B cell (primary cell): ENCODE measurements at regions of chr22 and their contacts with region 1.

Region 1: DNA sequence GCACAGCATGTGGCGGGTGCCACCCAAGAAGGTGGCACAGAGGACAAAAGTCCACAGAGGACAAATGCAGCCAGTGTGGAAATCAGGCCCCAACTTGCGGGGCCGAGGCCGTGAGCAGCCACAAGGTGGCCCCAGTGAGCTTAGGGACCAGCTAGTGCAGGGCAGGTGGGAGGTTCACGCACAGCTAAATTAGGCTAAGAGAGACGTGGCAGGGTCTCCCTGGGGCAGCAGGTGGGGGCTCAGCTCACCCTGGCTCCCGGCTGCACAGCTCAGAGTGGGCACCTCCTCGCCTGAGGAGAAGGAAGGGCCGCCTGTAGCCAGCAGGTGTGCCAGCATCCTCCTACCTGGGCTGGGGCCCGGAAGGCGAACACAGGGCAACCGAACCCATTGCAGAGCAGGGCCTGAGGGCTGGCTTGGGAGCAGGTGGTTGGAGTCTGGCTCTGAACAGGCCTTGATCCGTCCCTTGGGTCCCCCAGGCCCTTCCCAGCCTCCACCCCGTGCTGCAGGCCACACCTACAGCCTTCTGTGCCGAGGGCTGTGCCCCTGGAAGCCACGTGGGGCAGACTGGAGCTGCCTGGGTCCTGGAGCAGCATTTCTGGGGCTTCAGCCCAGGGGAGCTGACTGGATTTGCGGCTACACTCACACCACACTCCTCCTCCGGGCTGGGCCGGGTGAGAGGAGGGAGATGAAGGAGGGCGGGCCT is 26.1 kb upstream of the CELSR1 start:
- DNase-seq: peak; percentile 87
- ATAC-seq: peak; percentile 86
- H3K4me3 ChIP-seq: peak overlapping the region in 2 of 5 experiments; percentile 29 to 47
- H3K4me3 Mint-ChIP-seq: peak overlapping the region; percentile 72
- H3K27ac ChIP-seq: no peak overlapping the region
- H3K27ac Mint-ChIP-seq: peak overlapping the region; percentile 47
- H3K4me1 ChIP-seq: peaks cover 7 to 24% of the 10 kb centered on the region in 2 donors
- H3K4me1 Mint-ChIP-seq: peaks cover 19% of the 10 kb centered on the region
- H3K27me3 ChIP-seq: no peaks in the 10 kb centered on the region
- H3K27me3 Mint-ChIP-seq: no peaks in the 10 kb centered on the region
- CTCF ChIP-seq: peak; percentile 74

Region 2: DNA sequence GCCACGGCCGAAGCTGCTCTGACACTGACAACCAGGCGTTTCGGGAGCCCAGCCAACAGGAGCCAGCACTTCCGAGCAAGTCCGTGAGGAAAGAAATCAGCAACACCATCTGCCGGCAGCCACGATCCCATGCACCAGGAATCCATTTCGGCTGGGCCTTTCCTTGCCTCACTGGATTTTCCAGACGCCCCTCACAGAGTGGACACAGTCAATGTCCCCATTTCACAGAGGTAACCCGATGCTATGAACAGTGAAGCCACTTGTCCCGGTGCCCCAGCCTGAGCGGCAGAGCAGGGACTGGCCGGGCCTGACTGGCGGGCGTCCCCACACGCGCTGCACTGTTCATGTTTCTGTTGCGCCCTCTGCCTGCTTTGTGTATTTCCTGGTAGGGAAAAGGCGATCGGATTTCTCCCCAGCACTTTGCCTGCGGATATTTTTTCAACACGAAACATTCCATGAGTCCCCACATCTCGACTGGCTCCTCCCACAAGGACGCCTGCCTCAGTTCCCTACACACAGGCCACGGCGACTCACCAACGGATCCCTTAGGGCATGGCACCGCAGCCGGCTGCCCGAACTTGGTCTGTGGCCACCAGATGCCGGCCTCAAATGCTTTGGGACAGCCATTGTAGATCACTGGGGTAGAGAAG is 172.8 kb before region 1 on chr22:
- CTCF ChIA-PET with region 1: no interaction called
- POLR2A ChIA-PET with region 1: no interaction called
- intact Hi-C with region 1: no loop called
- DNase-seq: no peak
- ATAC-seq: no peak
- H3K4me3 ChIP-seq: no peak overlapping the region
- H3K4me3 Mint-ChIP-seq: no peak overlapping the region
- H3K27ac ChIP-seq: no peak overlapping the region
- H3K27ac Mint-ChIP-seq: no peak overlapping the region
- H3K4me1 ChIP-seq: no peaks in the 10 kb centered on the region
- H3K4me1 Mint-ChIP-seq: no peaks in the 10 kb centered on the region
- H3K27me3 ChIP-seq: no peaks in the 10 kb centered on the region
- H3K27me3 Mint-ChIP-seq: no peaks in the 10 kb centered on the region
- CTCF ChIP-seq: no peak

Region 3: DNA sequence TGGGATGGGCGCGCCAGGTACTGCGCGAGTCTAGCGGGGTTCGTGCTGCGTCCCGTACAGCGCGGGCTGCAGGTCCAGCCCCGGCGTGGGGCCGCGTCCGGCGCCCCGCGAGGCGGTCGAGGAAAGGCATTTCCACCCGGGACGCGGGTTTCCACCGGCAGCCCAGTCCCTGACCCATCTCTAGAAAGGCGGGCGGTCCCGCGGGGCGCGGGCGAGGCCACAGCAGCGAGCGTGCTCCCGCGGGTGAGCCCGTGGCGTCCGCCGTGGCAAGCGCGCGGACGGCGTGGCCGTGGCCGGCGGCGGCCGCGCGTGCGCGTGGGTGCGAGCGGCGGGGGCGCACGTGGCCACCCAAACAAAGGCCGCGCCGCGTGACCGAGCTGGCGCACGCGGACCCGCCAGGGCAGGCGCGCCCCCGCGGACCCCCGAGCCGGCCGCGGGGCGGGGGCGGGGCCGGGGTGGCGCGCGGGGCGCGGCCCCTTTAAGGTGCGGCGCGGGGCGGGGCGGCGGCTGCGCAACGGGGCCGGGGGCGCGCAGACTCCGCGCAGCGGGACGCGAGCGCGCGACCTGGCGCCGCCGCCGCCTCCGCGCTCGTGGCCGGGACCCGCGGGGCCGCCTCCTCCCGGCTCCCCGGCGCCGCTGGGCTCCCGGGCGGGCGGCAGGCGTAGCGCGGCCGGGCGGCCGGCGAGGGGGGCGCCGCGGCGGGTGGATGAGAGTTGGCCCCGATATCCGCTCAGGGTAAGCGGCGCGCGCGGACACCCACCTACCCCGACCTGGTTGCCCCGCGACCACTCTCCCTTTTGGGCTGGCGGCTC is 13.2 kb after region 1 on chr22:
- CTCF ChIA-PET with region 1: interaction called, 11 read pairs
- POLR2A ChIA-PET with region 1: no interaction called
- intact Hi-C with region 1: no loop called
- DNase-seq: peak; percentile 79
- ATAC-seq: peak; percentile 76
- H3K4me3 ChIP-seq: peak overlapping the region in 4 of 5 experiments; percentile 52 to 64 (median 61)
- H3K4me3 Mint-ChIP-seq: peak overlapping the region; percentile 84
- H3K27ac ChIP-seq: no peak overlapping the region
- H3K27ac Mint-ChIP-seq: peak overlapping the region; percentile 84
- H3K4me1 ChIP-seq: peaks cover 45 to 54% of the 10 kb centered on the region in 2 donors
- H3K4me1 Mint-ChIP-seq: peaks cover 54% of the 10 kb centered on the region
- H3K27me3 ChIP-seq: no peaks in the 10 kb centered on the region
- H3K27me3 Mint-ChIP-seq: no peaks in the 10 kb centered on the region
- CTCF ChIP-seq: no peak

Region 4: GRCh38 chr22:46598737-46599424 is 35.3 kb after region 1 on chr22:
- CTCF ChIA-PET with region 1: interaction called, 16 read pairs
- POLR2A ChIA-PET with region 1: interaction called, 3 read pairs
- intact Hi-C with region 1: no loop called
- DNase-seq: no peak
- ATAC-seq: no peak
- H3K4me3 ChIP-seq: no peak overlapping the region
- H3K4me3 Mint-ChIP-seq: no peak overlapping the region
- H3K27ac ChIP-seq: no peak overlapping the region
- H3K27ac Mint-ChIP-seq: no peak overlapping the region
- H3K4me1 ChIP-seq: peaks cover 8 to 39% of the 10 kb centered on the region in 2 donors
- H3K4me1 Mint-ChIP-seq: peaks cover 38% of the 10 kb centered on the region
- H3K27me3 ChIP-seq: no peaks in the 10 kb centered on the region
- H3K27me3 Mint-ChIP-seq: no peaks in the 10 kb centered on the region
- CTCF ChIP-seq: no peak

Region 5: DNA sequence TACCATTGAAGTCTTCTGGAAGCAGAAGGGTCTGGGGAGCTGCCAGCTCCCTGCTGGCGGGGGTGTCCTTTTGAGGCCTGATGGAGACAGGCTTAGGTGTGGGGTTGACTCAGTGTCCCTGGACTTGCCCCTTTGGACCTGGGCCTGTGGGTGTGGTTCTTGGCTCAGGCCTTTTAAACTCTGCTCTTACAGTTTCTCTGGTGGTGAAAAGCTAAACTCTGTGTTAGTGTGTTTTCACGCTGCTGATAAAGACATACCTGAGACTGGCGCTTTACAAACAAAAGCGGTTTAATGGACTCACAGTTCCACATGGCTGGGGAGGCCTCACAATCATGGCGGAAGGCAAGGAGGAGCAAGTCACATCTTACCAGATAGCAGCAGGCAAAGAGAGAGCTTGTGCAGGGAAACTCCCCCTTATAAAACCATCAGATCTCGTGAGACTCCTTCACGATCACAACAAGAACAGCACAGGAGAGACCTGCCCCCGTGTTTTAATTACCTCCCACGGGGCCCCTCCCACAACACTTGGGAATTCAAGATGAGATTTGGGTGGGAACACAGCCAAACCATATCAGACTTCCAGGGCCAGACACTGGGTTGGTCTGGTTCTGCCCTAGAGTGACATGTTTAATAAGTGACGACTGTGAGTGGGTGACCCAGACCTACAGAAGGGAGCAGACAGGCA is 83.1 kb after region 1 on chr22:
- CTCF ChIA-PET with region 1: interaction called, 11 read pairs
- POLR2A ChIA-PET with region 1: no interaction called
- intact Hi-C with region 1: no loop called
- DNase-seq: no peak
- ATAC-seq: no peak
- H3K4me3 ChIP-seq: no peak overlapping the region
- H3K4me3 Mint-ChIP-seq: no peak overlapping the region
- H3K27ac ChIP-seq: no peak overlapping the region
- H3K27ac Mint-ChIP-seq: no peak overlapping the region
- H3K4me1 ChIP-seq: peaks cover 7 to 18% of the 10 kb centered on the region in 2 donors
- H3K4me1 Mint-ChIP-seq: peaks cover 51% of the 10 kb centered on the region
- H3K27me3 ChIP-seq: no peaks in the 10 kb centered on the region
- H3K27me3 Mint-ChIP-seq: no peaks in the 10 kb centered on the region
- CTCF ChIP-seq: no peak

Region 6: GRCh38 chr22:46681010-46681409 is 117.5 kb after region 1 on chr22:
- CTCF ChIA-PET with region 1: interaction called, 56 read pairs
- POLR2A ChIA-PET with region 1: interaction called, 5 read pairs
- intact Hi-C with region 1: loop called (anchors 1 kb)
- DNase-seq: peak; percentile 50
- ATAC-seq: no peak
- H3K4me3 ChIP-seq: no peak overlapping the region
- H3K4me3 Mint-ChIP-seq: no peak overlapping the region
- H3K27ac ChIP-seq: no peak overlapping the region
- H3K27ac Mint-ChIP-seq: no peak overlapping the region
- H3K4me1 ChIP-seq: peaks cover 30 to 34% of the 10 kb centered on the region in 2 donors
- H3K4me1 Mint-ChIP-seq: peaks cover 29% of the 10 kb centered on the region
- H3K27me3 ChIP-seq: peaks cover 0 to 20% (median 0%) of the 10 kb centered on the region in 4 experiments
- H3K27me3 Mint-ChIP-seq: peaks cover 4% of the 10 kb centered on the region
- CTCF ChIP-seq: peak; percentile 47

Region 7: DNA sequence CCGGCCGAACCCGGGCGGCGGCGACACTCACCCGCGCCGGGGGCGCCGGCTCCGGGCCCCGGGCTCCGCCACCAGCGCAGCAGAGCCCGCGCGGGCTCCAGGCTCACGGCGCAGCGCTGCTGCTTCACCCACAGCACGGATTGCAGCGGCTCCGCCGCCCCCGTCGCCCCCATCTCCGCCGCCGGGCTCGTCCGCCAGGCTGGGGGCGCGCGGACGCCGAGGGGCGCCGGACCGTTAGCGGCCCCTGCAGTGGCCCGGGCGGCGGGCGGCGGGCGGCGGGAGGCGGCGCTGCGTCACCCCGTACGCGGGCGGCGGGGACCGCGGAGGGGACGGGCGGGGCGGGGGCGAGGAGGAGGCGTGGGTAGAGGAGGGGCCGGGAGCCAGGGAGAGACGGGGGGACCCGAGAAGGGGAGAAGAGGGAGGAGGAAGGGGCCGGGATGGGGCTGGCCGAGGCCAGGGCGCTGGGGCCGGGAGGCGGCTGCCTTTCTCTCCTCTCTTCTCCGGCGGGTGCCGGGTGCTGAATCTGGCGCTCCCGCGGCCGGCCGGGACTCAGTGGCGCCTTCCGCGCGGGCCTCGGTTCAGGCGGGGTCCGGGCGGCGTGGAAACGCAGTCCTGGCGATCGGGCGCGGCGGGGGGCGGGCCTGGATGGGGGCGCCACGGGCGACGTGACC is 174.6 kb after region 1 on chr22 and contains the start of gene CERK:
- CTCF ChIA-PET with region 1: interaction called, 18 read pairs
- POLR2A ChIA-PET with region 1: interaction called, 3 read pairs
- intact Hi-C with region 1: loop called (anchors 1 kb)
- DNase-seq: peak; percentile 67
- ATAC-seq: peak; percentile 53
- H3K4me3 ChIP-seq: peak within 1 kb of the TSS; percentile 49 to 82 (median 67)
- H3K4me3 Mint-ChIP-seq: peak within 1 kb of the TSS; percentile 98
- H3K27ac ChIP-seq: peak within 1 kb of the TSS; percentile 20 to 54
- H3K27ac Mint-ChIP-seq: peak within 1 kb of the TSS; percentile 93
- H3K4me1 ChIP-seq: peaks cover 49 to 51% of the 10 kb centered on the region in 2 donors
- H3K4me1 Mint-ChIP-seq: peaks cover 40% of the 10 kb centered on the region
- H3K27me3 ChIP-seq: peaks cover 0 to 3% (median 0%) of the 10 kb centered on the region in 4 experiments
- H3K27me3 Mint-ChIP-seq: no peaks in the 10 kb centered on the region
- CTCF ChIP-seq: no peak
- total RNA-seq, gene CERK: 48.3 and 55.9 TPM in 2 replicates

Region 8: GRCh38 chr22:46798366-46799350 is 235.1 kb after region 1 on chr22:
- CTCF ChIA-PET with region 1: interaction called, 60 read pairs
- POLR2A ChIA-PET with region 1: no interaction called
- intact Hi-C with region 1: loop called (anchors 1 kb)
- DNase-seq: peak; percentile 74
- ATAC-seq: peak; percentile 78
- H3K4me3 ChIP-seq: no peak overlapping the region
- H3K4me3 Mint-ChIP-seq: no peak overlapping the region
- H3K27ac ChIP-seq: peak overlapping the region in 1 of 2 donors; percentile 9
- H3K27ac Mint-ChIP-seq: peak overlapping the region; percentile 83
- H3K4me1 ChIP-seq: peaks cover 7 to 8% of the 10 kb centered on the region in 2 donors
- H3K4me1 Mint-ChIP-seq: peaks cover 47% of the 10 kb centered on the region
- H3K27me3 ChIP-seq: no peaks in the 10 kb centered on the region
- H3K27me3 Mint-ChIP-seq: no peaks in the 10 kb centered on the region
- CTCF ChIP-seq: peak; percentile 79